A673 (cell line): ENCODE measurements at regions of chr3 and their contacts with region 1.

Region 1: GRCh38 chr3:58332575-58333188 is at the start of gene PXK:
- DNase-seq: peak; percentile 68
- H3K4me3 ChIP-seq: peak within 1 kb of the TSS; percentile 64
- H3K27ac ChIP-seq: peak within 1 kb of the TSS; percentile 47
- H3K4me1 ChIP-seq: peaks cover 15% of the 10 kb centered on the region
- H3K27me3 ChIP-seq: no peaks in the 10 kb centered on the region
- CTCF ChIP-seq: no peak
- total RNA-seq, gene PXK: 13.2 and 14.2 TPM in 2 replicates

Region 2: GRCh38 chr3:58027704-58028317 is 304.9 kb before region 1 on chr3:
- CTCF ChIA-PET with region 1: interaction called, 11 read pairs
- POLR2A ChIA-PET with region 1: no interaction called
- intact Hi-C with region 1: no loop called
- DNase-seq: no peak
- H3K4me3 ChIP-seq: no peak overlapping the region
- H3K27ac ChIP-seq: no peak overlapping the region
- H3K4me1 ChIP-seq: no peaks in the 10 kb centered on the region
- H3K27me3 ChIP-seq: no peaks in the 10 kb centered on the region
- CTCF ChIP-seq: no peak

Region 3: GRCh38 chr3:58386626-58387365 is 54.1 kb after region 1 on chr3:
- CTCF ChIA-PET with region 1: no interaction called
- POLR2A ChIA-PET with region 1: no interaction called
- intact Hi-C with region 1: loop called (anchors 5 kb)
- DNase-seq: peak; percentile 50
- H3K4me3 ChIP-seq: no peak overlapping the region
- H3K27ac ChIP-seq: peak overlapping the region; percentile 84
- H3K4me1 ChIP-seq: peaks cover 47% of the 10 kb centered on the region
- H3K27me3 ChIP-seq: no peaks in the 10 kb centered on the region
- CTCF ChIP-seq: no peak